ENCODE measurements at regions of chr1 and their contacts with region 1.

Region 1: GRCh38 chr1:182595641-182596240 is 6.7 kb upstream of the RNASEL start:
- DNase-seq: peak; percentile 64

Region 2: GRCh38 chr1:182662121-182662890 is 66.6 kb after region 1 on chr1:
- in situ Hi-C with region 1: no loop called
- DNase-seq: no peak

Region 3: DNA sequence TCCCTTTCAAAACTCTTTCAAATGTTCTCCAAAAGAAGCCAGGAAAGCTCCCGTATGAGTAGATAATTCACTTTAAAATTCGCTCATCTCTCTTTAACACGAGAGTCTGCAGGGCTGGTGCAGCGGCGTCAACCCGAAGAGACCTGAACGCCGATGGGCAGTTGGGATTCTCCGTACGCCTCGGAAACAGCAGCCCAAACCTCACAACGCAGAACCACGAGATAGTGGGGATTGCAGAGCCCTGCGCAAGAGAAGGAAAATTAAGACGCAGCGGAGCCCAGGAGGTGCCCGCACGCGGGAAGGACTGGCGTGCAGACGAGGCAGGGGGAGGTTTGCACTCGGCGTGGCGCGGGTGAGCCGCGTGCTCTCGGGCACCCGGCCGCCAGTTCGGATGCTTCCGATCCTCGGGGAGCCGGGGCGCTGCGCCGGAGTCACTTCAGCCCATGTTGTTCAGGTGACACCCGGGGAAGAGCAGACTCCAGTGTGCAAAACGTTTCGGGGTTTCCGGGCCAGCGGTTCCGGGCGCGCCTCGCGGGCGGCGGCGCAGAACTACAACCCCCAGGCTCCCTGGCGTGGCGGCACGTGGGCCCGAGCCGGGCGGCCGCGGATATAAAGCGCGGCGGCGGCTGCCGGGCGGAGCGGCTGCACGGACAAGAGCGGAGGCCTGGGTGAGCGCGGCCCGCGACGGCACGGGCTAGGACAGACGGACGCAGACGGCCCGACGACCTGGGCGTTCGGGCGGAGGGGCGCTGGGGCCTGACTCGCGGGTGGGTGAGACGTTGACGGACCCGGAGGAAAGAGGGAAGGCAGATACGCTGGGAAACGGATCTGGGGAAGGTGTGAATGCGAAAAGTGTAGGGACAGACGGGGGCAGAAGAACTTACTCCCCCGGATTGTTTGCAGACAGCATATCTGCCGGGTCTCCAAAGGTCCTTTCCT is 193.7 kb after region 1 on chr1 and contains the start of gene NPL:
- in situ Hi-C with region 1: loop called (anchors 10 kb)
- DNase-seq: peak; percentile 35

Measured in ACHN (cell line).